BJ (cell line): ENCODE measurements at regions of chr1 and their contacts with region 1.

Region 1: DNA sequence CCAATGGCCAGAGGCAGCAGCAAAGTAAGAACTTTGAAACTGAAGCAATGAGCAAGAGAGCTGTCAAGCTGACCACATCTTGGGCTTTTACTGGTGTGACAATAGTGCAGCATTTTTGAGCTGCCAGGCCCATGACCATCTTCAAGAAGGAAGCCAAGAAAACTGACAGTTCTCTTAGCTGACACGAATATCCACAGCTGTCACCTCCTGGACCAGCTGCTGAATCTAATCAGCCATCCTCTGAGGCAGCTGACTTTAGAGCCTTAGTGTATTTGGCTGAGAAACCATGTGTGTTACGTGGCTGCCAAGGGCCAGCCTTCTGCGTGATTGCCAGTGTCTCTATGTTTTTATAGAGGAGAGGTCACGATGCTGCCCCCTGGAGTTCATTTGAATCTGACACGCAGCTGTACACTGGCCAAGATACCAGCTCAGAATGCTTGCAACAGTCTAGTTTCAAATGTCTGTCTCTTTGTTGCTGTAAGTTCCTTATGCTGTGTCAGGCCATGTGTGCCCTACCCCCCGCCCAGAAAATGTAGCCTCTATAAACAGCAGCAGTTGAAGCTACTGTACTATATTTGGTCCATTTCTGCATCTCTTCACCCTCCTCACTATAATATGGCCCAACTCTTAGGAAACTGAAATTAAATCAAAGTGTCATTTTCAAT is 39.7 kb downstream of the PALMD start:
- DNase-seq: peak; percentile 68
- H3K4me3 ChIP-seq: no peak overlapping the region
- H3K27me3 ChIP-seq: no peaks in the 10 kb centered on the region
- CTCF ChIP-seq: peak; percentile 58

Region 2: GRCh38 chr1:99279525-99279924 is 406.1 kb before region 1 on chr1:
- CTCF ChIA-PET with region 1: no interaction called
- POLR2A ChIA-PET with region 1: no interaction called
- DNase-seq: no peak
- H3K4me3 ChIP-seq: no peak overlapping the region
- H3K27me3 ChIP-seq: no peaks in the 10 kb centered on the region
- CTCF ChIP-seq: no peak

Region 3: GRCh38 chr1:99672500-99673213 is 13.0 kb before region 1 on chr1:
- CTCF ChIA-PET with region 1: interaction called, 11 read pairs
- POLR2A ChIA-PET with region 1: no interaction called
- DNase-seq: no peak
- H3K4me3 ChIP-seq: no peak overlapping the region
- H3K27me3 ChIP-seq: no peaks in the 10 kb centered on the region
- CTCF ChIP-seq: no peak